HCT116 (cell line): ENCODE measurements at regions of chr11 and their contacts with region 1.

Region 1: GRCh38 chr11:119533921-119534736 is 111.2 kb upstream of the THY1 start:
- DNase-seq: peak; percentile 38
- ATAC-seq: peak; percentile 97
- H3K4me3 ChIP-seq: no peak overlapping the region
- H3K27ac ChIP-seq: no peak overlapping the region
- H3K4me1 ChIP-seq: peaks cover 0 to 6% of the 10 kb centered on the region in 2 experiments; a peak in 1 of 4 replicates
- H3K27me3 ChIP-seq: no peaks in the 10 kb centered on the region
- CTCF ChIP-seq: peak; percentile 94 to 99 (median 98)
- POLR2A ChIP-seq: no peak
- RAD21 ChIP-seq: peak; percentile 77

Region 2: GRCh38 chr11:119481021-119481666 is 53.0 kb before region 1 on chr11:
- CTCF ChIA-PET with region 1: interaction called, 4 read pairs
- POLR2A ChIA-PET with region 1: no interaction called
- RAD21 ChIA-PET with region 1: interaction called in 1 of 2 experiments, 3 read pairs
- intact Hi-C with region 1: loop called (anchors 1 kb)
- DNase-seq: no peak
- ATAC-seq: peak; percentile 86
- H3K4me3 ChIP-seq: no peak overlapping the region
- H3K27ac ChIP-seq: no peak overlapping the region
- H3K4me1 ChIP-seq: peaks cover 3 to 22% of the 10 kb centered on the region in 2 experiments; a peak in 3 of 4 replicates
- H3K27me3 ChIP-seq: no peaks in the 10 kb centered on the region
- CTCF ChIP-seq: peak; percentile 93 to 99 (median 96)
- POLR2A ChIP-seq: no peak
- RAD21 ChIP-seq: peak; percentile 98

Region 3: GRCh38 chr11:119550053-119550752 is 16.1 kb after region 1 on chr11:
- CTCF ChIA-PET with region 1: interaction called, 15 read pairs
- POLR2A ChIA-PET with region 1: no interaction called
- RAD21 ChIA-PET with region 1: no interaction called
- intact Hi-C with region 1: no loop called
- DNase-seq: no peak
- ATAC-seq: no peak
- H3K4me3 ChIP-seq: no peak overlapping the region
- H3K27ac ChIP-seq: no peak overlapping the region
- H3K4me1 ChIP-seq: peaks cover 0 to 6% of the 10 kb centered on the region in 2 experiments; a peak in 2 of 4 replicates
- H3K27me3 ChIP-seq: no peaks in the 10 kb centered on the region
- CTCF ChIP-seq: no peak
- POLR2A ChIP-seq: no peak
- RAD21 ChIP-seq: no peak